Motor neuron (in vitro differentiated cells): ENCODE measurements at regions of chr7 and their contacts with region 1.

Region 1: GRCh38 chr7:24318326-24318725 is 34.3 kb downstream of the NPY start:
- ATAC-seq: peak in 3 of 8 experiments; percentile 17 to 48 (median 27)
- H3K4me3 ChIP-seq: no peak overlapping the region
- H3K27ac ChIP-seq: no peak overlapping the region
- H3K4me1 ChIP-seq: no peaks in the 10 kb centered on the region

Region 2: DNA sequence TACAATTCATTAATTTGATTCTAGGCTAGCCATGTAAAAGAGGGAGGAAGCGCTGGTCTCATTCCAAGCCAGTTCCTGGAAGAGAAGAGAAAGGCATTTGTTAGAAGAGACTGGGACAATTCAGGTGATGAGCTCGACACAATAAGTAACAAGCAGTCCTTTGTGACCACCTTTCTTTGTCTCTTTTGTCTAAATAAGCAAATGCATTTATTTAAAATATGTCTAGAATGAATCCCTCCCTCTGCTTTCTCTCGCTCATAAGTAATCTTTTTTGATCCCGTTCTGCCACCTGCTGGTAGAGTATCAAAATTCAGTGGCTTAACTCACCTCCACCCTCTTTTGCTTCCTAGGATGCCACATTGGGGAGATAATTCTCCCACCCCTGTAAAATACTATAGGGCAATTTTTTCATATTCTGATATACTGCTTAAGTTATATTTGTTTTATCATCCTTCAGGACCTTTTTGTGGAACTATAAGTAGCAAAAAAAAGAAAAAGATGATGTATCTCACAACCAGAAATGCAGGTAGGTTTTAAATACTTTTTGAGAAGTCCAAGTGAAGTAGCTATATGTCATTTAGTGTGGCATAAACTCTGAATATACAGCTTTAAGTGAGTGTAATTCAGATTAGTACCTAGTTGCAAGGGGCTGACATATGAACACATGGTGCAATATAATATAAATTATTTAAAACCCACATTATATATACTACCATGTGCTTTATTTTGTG is 347.4 kb after region 1 on chr7:
- in situ Hi-C with region 1: loop called in 1 of 9 experiments (anchors 25 kb)
- ATAC-seq: peak in 7 of 8 experiments; percentile 53 to 81 (median 67)
- H3K4me3 ChIP-seq: no peak overlapping the region
- H3K27ac ChIP-seq: no peak overlapping the region
- H3K4me1 ChIP-seq: peaks cover 0 to 2% of the 10 kb centered on the region in 2 donors